GM12878 (cell line): ENCODE measurements at regions of chr2 and their contacts with region 1.

Region 1: GRCh38 chr2:218568190-218569037 is at the starts of genes CNOT9 and USP37:
- DNase-seq: peak; percentile 94
- ATAC-seq: peak; percentile 84
- H3K4me3 ChIP-seq: peak within 1 kb of the TSS; percentile 95
- H3K27ac ChIP-seq: peak within 1 kb of the TSS; percentile 98
- H3K4me1 ChIP-seq: peaks cover 8% of the 10 kb centered on the region; the same call in 1 of the 2 replicates
- H3K27me3 ChIP-seq: no peaks in the 10 kb centered on the region
- CTCF ChIP-seq: no peak
- EP300 ChIP-seq: no peak
- POLR2A ChIP-seq: peak; percentile 88
- RAD21 ChIP-seq: no peak
- polyA plus RNA-seq, gene CNOT9: 51.0 to 58.5 TPM
- polyA plus RNA-seq, gene USP37: 2.8 to 4.1 TPM

Region 2: DNA sequence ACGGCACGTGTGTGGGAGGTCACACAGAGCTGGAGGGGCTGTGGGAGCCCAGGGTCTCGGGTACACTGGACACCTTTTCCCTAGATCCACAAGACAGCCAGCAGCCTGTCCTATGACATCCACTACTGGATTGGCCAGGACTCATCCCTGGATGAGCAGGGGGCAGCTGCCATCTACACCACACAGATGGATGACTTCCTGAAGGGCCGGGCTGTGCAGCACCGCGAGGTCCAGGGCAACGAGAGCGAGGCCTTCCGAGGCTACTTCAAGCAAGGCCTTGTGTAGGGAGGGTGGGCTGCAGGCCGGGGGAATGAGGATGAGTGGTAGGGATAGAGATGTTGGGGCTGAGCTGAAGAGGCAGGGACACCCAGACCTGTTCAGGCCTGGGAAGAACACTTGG is 142.9 kb before region 1 on chr2:
- CTCF ChIA-PET with region 1: no interaction called
- POLR2A ChIA-PET with region 1: no interaction called
- RAD21 ChIA-PET with region 1: no interaction called
- SMC1A ChIA-PET with region 1: no interaction called
- in situ Hi-C with region 1: no loop called
- intact Hi-C with region 1: no loop called
- DNase-seq: no peak
- ATAC-seq: no peak
- H3K4me3 ChIP-seq: no peak overlapping the region
- H3K27ac ChIP-seq: no peak overlapping the region
- H3K4me1 ChIP-seq: no peaks in the 10 kb centered on the region
- H3K27me3 ChIP-seq: no peaks in the 10 kb centered on the region
- CTCF ChIP-seq: no peak
- EP300 ChIP-seq: no peak
- POLR2A ChIP-seq: no peak
- RAD21 ChIP-seq: no peak

Region 3: GRCh38 chr2:218516614-218517013 is 51.8 kb before region 1 on chr2:
- CTCF ChIA-PET with region 1: interaction called, 3 read pairs
- POLR2A ChIA-PET with region 1: interaction called, 3 read pairs
- RAD21 ChIA-PET with region 1: no interaction called
- SMC1A ChIA-PET with region 1: interaction called, 3 read pairs
- in situ Hi-C with region 1: no loop called
- intact Hi-C with region 1: loop called (anchors 5 kb)
- DNase-seq: no peak
- ATAC-seq: peak; percentile 56
- H3K4me3 ChIP-seq: 0 out of 2 replicates have a peak overlapping the region, but pooled peaks have one; percentile 8
- H3K27ac ChIP-seq: peak overlapping the region; percentile 81
- H3K4me1 ChIP-seq: peaks cover 31% of the 10 kb centered on the region
- H3K27me3 ChIP-seq: no peaks in the 10 kb centered on the region
- CTCF ChIP-seq: peak in 2 of 3 experiments; percentile 27 to 45; a peak in 4 of 6 replicates
- EP300 ChIP-seq: no peak
- POLR2A ChIP-seq: no peak
- RAD21 ChIP-seq: peak; percentile 11; the same call in 1 of the 2 replicates